Activated CD4-positive, alpha-beta memory T cell treated with anti-CD3 and anti-CD28 coated beads for 36 hours (primary cell): ENCODE measurements at regions of chr5 and their contacts with region 1.

Region 1: GRCh38 chr5:81301271-81302015 is at the start of gene ZCCHC9:
- DNase-seq: peak; percentile 96
- H3K4me3 Mint-ChIP-seq: peak within 1 kb of the TSS; percentile 92
- H3K27ac Mint-ChIP-seq: peak within 1 kb of the TSS; percentile 92
- H3K4me1 Mint-ChIP-seq: peaks cover 61% of the 10 kb centered on the region
- H3K27me3 Mint-ChIP-seq: no peaks in the 10 kb centered on the region
- total RNA-seq, gene ZCCHC9: 42.6 to 49.1 TPM

Region 2: GRCh38 chr5:80407735-80408482 is 893.5 kb before region 1 on chr5 and contains the start of gene ZFYVE16:
- CTCF ChIA-PET with region 1: no interaction called
- POLR2A ChIA-PET with region 1: no interaction called
- intact Hi-C with region 1: loop called (anchors 10 kb)
- DNase-seq: peak; percentile 98
- H3K4me3 Mint-ChIP-seq: peak within 1 kb of the TSS; percentile 92
- H3K27ac Mint-ChIP-seq: peak within 1 kb of the TSS; percentile 97
- H3K4me1 Mint-ChIP-seq: peaks cover 16% of the 10 kb centered on the region
- H3K27me3 Mint-ChIP-seq: no peaks in the 10 kb centered on the region
- total RNA-seq, gene ZFYVE16: 12.1 to 15.7 TPM

Region 3: GRCh38 chr5:80754900-80755299 is 546.5 kb before region 1 on chr5:
- CTCF ChIA-PET with region 1: interaction called, 3 read pairs
- POLR2A ChIA-PET with region 1: no interaction called
- intact Hi-C with region 1: loop called (anchors 5 kb)
- DNase-seq: peak; percentile 66
- H3K4me3 Mint-ChIP-seq: peak overlapping the region; percentile 45
- H3K27ac Mint-ChIP-seq: peak overlapping the region; percentile 71
- H3K4me1 Mint-ChIP-seq: peaks cover 54% of the 10 kb centered on the region
- H3K27me3 Mint-ChIP-seq: no peaks in the 10 kb centered on the region

Region 4: GRCh38 chr5:81097713-81098112 is 203.7 kb before region 1 on chr5:
- CTCF ChIA-PET with region 1: no interaction called
- POLR2A ChIA-PET with region 1: no interaction called
- intact Hi-C with region 1: no loop called
- DNase-seq: no peak
- H3K4me3 Mint-ChIP-seq: no peak overlapping the region
- H3K27ac Mint-ChIP-seq: no peak overlapping the region
- H3K4me1 Mint-ChIP-seq: no peaks in the 10 kb centered on the region
- H3K27me3 Mint-ChIP-seq: no peaks in the 10 kb centered on the region

Region 5: DNA sequence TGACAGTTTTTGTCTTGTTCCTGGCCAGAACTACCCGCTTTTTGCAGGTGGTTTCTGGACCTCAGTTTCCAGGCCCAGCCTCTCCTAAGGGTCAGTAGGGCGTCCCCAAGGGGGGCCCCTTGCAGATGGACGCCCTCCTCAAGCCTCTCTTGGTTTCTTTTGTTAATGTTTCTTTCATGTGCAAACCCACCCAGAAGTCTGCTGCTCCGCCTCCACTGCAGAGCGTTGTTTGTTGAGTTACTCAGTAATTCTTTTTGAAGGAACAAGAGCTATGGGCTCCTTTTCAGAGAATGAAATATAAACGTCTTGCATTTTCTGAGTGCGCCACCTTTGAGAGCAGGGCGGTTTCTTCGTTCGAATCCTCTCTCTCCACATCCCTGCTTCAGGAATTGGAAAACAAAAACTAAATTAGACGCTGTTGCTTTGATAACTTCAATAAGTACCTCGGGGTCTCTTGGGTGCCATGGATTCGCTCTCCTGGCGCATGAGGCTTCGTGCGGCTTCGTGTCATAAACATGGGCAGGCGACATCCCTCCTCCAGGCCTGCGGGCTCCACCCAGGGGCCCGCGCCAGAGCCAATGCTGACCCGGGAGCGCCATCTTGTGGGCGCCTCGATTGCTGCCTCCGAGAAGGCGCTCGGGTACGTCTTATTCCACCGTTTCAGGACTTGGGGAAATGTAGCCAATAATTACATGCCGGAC is 106.7 kb before region 1 on chr5:
- CTCF ChIA-PET with region 1: interaction called, 17 read pairs
- POLR2A ChIA-PET with region 1: no interaction called
- intact Hi-C with region 1: no loop called
- DNase-seq: peak; percentile 88
- H3K4me3 Mint-ChIP-seq: peak overlapping the region; percentile 0
- H3K27ac Mint-ChIP-seq: no peak overlapping the region
- H3K4me1 Mint-ChIP-seq: peaks cover 7% of the 10 kb centered on the region
- H3K27me3 Mint-ChIP-seq: no peaks in the 10 kb centered on the region

Region 6: GRCh38 chr5:81420039-81420667 is 118.7 kb after region 1 on chr5:
- CTCF ChIA-PET with region 1: interaction called, 3 read pairs
- POLR2A ChIA-PET with region 1: no interaction called
- intact Hi-C with region 1: loop called (anchors 1 kb)
- DNase-seq: no peak
- H3K4me3 Mint-ChIP-seq: no peak overlapping the region
- H3K27ac Mint-ChIP-seq: peak overlapping the region; percentile 21
- H3K4me1 Mint-ChIP-seq: peaks cover 14% of the 10 kb centered on the region
- H3K27me3 Mint-ChIP-seq: no peaks in the 10 kb centered on the region

Region 7: GRCh38 chr5:81851481-81852178 is 550.2 kb after region 1 on chr5:
- CTCF ChIA-PET with region 1: no interaction called
- POLR2A ChIA-PET with region 1: no interaction called
- intact Hi-C with region 1: loop called (anchors 5 kb)
- DNase-seq: peak; percentile 93
- H3K4me3 Mint-ChIP-seq: peak overlapping the region; percentile 89
- H3K27ac Mint-ChIP-seq: peak overlapping the region; percentile 92
- H3K4me1 Mint-ChIP-seq: peaks cover 28% of the 10 kb centered on the region
- H3K27me3 Mint-ChIP-seq: no peaks in the 10 kb centered on the region

Region 8: GRCh38 chr5:81994679-81995078 is 693.2 kb after region 1 on chr5:
- CTCF ChIA-PET with region 1: no interaction called
- POLR2A ChIA-PET with region 1: no interaction called
- intact Hi-C with region 1: no loop called
- DNase-seq: no peak
- H3K4me3 Mint-ChIP-seq: no peak overlapping the region
- H3K27ac Mint-ChIP-seq: no peak overlapping the region
- H3K4me1 Mint-ChIP-seq: no peaks in the 10 kb centered on the region
- H3K27me3 Mint-ChIP-seq: no peaks in the 10 kb centered on the region

Region 9: GRCh38 chr5:82165740-82166530 is 864.5 kb after region 1 on chr5:
- CTCF ChIA-PET with region 1: interaction called, 4 read pairs
- POLR2A ChIA-PET with region 1: no interaction called
- intact Hi-C with region 1: loop called (anchors 10 kb)
- DNase-seq: peak; percentile 30
- H3K4me3 Mint-ChIP-seq: no peak overlapping the region
- H3K27ac Mint-ChIP-seq: no peak overlapping the region
- H3K4me1 Mint-ChIP-seq: peaks cover 6% of the 10 kb centered on the region
- H3K27me3 Mint-ChIP-seq: no peaks in the 10 kb centered on the region